K562 (cell line): ENCODE measurements at regions of chr12 and their contacts with region 1.

Region 1: DNA sequence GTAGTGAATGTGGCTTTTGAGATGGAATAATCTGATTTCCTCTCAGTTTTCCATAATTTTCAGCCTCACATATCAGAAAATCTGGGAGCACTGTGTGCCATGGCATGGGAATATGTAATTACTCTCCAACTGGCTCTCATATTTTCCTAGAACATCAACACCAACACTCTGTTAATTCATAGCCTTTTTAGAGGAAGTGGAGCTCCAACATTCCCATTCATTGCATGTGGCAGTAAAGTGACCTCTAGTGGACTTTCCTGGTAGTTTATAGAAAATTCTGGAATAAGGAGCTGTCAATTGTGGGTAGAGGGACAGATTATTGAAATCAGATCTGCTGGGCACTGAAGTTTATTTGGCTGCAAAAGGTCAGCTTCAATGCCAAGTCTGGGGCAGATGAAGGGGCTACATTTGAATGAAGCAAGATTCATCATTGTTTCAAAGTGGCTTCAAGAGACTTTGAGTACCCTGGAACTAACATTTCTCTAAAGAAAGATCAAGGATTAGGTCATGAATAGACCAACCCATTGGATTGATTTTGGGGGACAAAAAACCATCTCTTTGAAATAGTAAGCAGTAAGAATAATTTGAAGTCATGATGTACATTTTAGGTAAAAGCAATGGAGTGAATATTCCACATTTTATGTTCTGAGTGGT is 23.6 kb upstream of the USP44 start:
- DNase-seq: peak; percentile 22 to 51 (median 28)
- ATAC-seq: peak; percentile 64
- H3K4me3 ChIP-seq: no peak overlapping the region
- H3K27ac ChIP-seq: no peak overlapping the region
- H3K4me1 ChIP-seq: no peaks in the 10 kb centered on the region; a peak in 1 of 5 replicates
- H3K27me3 ChIP-seq: no peaks in the 10 kb centered on the region; a peak in 2 of 5 replicates
- CTCF ChIP-seq: peak; percentile 47 to 75 (median 62)
- EP300 ChIP-seq: no peak
- POLR2A ChIP-seq: no peak
- RAD21 ChIP-seq: peak; percentile 59 to 79

Region 2: DNA sequence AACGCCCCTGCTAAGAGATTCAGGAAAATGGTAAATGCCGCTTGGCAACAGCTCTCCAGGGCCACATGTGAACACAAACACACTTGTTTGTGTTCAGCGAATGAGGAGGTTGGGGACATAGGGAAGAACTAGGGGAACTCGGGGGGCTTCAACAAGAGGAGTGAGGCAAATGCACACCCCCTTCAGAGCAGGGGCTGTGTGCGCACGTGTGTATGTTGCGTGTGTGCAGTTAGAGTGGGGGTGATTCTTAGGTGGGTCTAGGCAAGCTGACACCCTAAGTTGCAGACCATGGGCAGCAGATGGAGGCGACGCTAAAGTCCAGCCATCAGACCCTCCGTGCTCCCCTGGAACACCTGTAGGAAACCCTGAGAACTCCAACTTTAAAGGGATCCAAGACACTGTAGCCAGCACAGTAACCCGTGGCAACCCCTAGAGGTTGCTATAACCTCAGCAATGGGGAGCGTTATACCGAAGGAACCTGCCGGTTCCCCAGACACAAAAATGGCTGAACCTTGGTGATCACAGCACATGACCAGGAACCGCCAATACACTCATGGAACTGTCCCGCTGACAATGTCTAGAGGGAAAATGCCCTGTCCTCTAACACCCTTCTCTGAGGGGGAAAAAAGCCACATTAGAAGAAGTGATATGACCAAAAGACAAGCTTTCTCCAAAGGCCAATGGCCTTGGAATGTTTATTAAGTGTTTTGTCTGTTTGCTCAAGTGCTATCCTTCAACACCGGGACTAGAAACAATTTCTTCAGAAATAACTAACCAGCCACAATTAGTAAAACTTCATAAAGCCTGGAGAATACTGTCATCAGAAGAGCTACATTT is 1028.8 kb before region 1 on chr12:
- CTCF ChIA-PET with region 1: no interaction called
- POLR2A ChIA-PET with region 1: no interaction called
- in situ Hi-C with region 1: no loop called
- intact Hi-C with region 1: loop called (anchors 10 kb)
- DNase-seq: peak; percentile 50 to 60 (median 56)
- ATAC-seq: peak; percentile 92
- H3K4me3 ChIP-seq: no peak overlapping the region
- H3K27ac ChIP-seq: no peak overlapping the region
- H3K4me1 ChIP-seq: no peaks in the 10 kb centered on the region
- H3K27me3 ChIP-seq: peaks cover 0 to 13% of the 10 kb centered on the region in 2 experiments; a peak in 2 of 5 replicates
- CTCF ChIP-seq: peak; percentile 58 to 69 (median 67)
- EP300 ChIP-seq: no peak
- POLR2A ChIP-seq: no peak
- RAD21 ChIP-seq: peak; percentile 52 to 82

Region 3: DNA sequence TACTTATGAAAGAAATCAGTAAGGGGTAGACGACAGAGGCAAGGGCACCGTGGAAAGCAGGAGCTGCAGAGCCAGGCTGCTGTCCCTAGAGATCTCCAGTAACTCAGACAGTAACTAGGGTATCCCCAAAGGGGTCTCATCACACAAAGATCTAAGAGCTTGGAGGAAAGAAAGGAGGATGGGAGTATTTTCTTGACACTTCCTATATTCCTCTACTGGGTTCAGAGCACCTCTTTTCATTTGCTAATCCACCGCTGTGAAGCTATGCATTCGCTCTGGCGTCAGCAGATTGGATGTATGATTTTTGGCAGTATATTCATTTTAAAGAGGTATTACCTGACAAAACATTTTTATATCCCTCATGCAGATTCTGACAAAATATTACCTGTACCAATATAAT is 36.3 kb before region 1 on chr12:
- CTCF ChIA-PET with region 1: no interaction called
- POLR2A ChIA-PET with region 1: no interaction called
- in situ Hi-C with region 1: no loop called
- intact Hi-C with region 1: loop called (anchors 5 kb)
- DNase-seq: no peak
- ATAC-seq: no peak
- H3K4me3 ChIP-seq: no peak overlapping the region
- H3K27ac ChIP-seq: no peak overlapping the region
- H3K4me1 ChIP-seq: no peaks in the 10 kb centered on the region
- H3K27me3 ChIP-seq: no peaks in the 10 kb centered on the region
- CTCF ChIP-seq: no peak
- EP300 ChIP-seq: no peak
- POLR2A ChIP-seq: no peak
- RAD21 ChIP-seq: no peak